GM18951 (cell line): ENCODE measurements at regions of chr15 and their contacts with region 1.

Region 1: GRCh38 chr15:85044251-85044853 is 62.7 kb downstream of the PDE8A start:
- POLR2A ChIP-seq: no peak

Region 2: GRCh38 chr15:84979651-84980050 is 64.7 kb before region 1 on chr15:
- in situ Hi-C with region 1: loop called (anchors 10 kb)
- POLR2A ChIP-seq: no peak

Region 3: DNA sequence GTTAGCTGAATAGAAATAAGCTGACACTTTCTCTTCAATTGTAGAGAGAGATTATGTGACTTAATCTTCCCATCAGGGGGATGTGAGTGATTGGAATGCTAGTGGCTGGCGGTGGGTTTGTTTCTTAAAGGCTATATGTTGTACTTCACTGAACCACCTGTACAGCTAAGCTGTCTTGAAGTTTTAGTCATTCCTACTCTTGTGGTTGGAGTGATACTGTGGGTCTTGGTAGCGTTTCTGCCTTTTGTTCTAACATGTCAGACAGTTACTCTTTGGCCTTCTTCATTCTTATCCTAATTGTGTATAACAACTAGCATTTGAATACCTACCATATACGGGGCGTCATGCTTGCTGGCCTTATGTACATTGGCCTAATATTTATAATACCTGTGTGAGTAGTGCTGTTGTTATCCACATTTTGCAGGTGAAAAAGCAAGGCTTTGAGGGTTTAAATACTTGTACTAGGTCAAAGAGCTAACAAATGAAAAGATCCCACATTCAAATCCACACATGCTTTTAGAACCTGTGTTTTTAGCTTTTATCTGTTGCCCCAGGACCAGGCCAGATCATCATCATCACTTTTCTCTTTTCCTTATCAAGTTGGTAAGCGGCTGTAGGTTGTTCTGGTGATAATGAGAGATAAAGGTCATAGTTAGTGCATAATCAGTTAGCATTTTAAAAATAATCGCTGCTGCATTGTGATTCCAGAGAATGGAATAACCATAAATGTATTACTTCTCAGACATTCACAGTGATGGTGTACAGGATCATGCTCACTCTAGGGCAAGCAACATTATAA is 386.3 kb after region 1 on chr15:
- in situ Hi-C with region 1: no loop called
- POLR2A ChIP-seq: no peak